ENCODE measurements at regions of chr2 and their contacts with region 1.

Region 1: DNA sequence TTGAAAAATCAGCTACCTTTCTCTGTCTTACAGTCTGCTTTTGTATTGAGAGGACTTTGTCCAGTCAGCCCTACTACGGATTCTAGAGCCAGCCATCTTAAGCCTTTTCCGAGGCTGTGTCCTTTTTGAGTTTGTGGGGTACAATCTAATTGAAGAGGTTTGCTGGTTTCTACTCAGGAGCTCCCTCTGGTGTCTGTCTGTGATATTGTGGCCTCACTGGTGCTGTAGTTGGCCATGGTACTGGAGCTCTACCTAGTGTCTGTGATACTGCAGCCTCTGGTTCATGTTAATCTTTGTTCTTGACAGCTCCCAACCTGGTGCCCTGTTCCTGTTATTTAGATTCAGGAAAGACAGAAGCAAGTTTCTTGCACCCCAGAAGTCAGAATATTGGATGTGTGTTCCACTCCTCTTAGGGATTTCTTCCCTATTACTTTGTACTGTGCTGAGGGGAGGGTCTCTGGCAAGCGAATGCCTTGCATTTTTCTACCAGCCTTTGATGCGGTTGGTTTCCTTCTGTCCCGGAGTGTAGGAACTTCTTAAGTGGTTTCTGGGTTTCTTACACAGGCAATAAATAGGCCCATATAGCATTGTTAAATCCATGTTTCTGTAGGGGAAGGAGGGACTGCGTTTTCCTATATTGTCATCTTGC is 78.5 kb downstream of the ACSL3 start:
- DNase-seq: peak; percentile 73
- H3K4me3 ChIP-seq: no peak overlapping the region
- H3K27ac ChIP-seq: no peak overlapping the region
- H3K4me1 ChIP-seq: no peaks in the 10 kb centered on the region
- CTCF ChIP-seq: peak; percentile 96

Region 2: GRCh38 chr2:222518570-222519381 is 420.6 kb before region 1 on chr2:
- CTCF ChIA-PET with region 1: no interaction called
- POLR2A ChIA-PET with region 1: no interaction called
- intact Hi-C with region 1: no loop called
- DNase-seq: no peak
- H3K4me3 ChIP-seq: no peak overlapping the region
- H3K27ac ChIP-seq: no peak overlapping the region
- H3K4me1 ChIP-seq: no peaks in the 10 kb centered on the region
- CTCF ChIP-seq: no peak

Region 3: DNA sequence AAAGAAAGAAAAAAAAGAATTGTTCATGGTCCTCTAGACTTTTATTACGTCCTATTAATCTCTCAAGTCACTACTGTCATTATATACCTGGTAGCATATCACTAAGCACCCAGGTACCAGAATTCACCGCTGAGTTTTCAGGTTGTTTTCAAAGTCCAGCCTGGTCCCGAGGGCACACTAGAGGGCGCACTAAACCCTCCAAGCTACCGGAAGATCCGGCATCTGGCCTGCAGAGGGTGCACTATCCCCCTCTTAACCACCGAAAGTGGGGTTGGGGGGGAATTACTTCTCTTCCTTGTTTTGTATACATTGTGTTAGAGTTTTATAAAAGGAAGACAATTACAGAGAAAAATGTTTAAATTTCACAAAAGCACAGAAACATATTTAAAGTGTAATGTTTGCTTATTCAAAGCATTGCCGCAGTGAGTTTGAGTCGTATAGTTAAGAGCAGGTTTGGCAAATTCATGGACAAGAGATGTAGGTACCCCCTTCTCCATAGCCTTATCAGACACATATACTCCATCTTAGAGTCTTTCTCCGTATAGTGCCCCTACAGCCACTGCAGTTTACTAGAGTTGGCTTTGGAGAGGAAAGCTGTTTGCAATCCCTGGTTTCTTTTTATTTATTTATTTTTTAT is 248.7 kb before region 1 on chr2:
- CTCF ChIA-PET with region 1: interaction called, 4 read pairs
- POLR2A ChIA-PET with region 1: no interaction called
- intact Hi-C with region 1: loop called (anchors 1 kb)
- DNase-seq: peak; percentile 89
- H3K4me3 ChIP-seq: no peak overlapping the region
- H3K27ac ChIP-seq: no peak overlapping the region
- H3K4me1 ChIP-seq: no peaks in the 10 kb centered on the region
- CTCF ChIP-seq: peak; percentile 100

Region 4: GRCh38 chr2:222969491-222969890 is 30.2 kb after region 1 on chr2:
- CTCF ChIA-PET with region 1: no interaction called
- POLR2A ChIA-PET with region 1: no interaction called
- intact Hi-C with region 1: no loop called
- DNase-seq: no peak
- H3K4me3 ChIP-seq: no peak overlapping the region
- H3K27ac ChIP-seq: no peak overlapping the region
- H3K4me1 ChIP-seq: no peaks in the 10 kb centered on the region
- CTCF ChIP-seq: no peak

Region 5: DNA sequence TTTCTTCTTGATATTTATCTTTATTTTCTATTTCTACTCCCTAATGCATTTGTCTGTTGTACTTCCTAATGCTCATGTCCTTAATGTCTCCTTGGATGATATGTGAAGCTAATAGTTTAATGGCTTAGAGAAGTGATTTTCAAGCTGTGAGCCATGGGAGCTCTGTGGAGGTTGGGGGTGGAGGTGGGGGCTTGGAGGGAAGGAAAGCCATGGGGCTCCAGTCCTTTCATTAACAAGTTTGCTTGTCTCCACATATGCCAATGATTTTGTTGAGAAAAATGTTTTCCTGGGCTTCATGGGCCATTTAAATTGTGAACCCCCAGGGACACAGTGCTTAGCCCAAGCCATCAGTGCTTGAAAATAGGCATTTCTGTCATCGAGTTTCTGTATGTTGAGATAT is 398.7 kb after region 1 on chr2:
- CTCF ChIA-PET with region 1: no interaction called
- POLR2A ChIA-PET with region 1: no interaction called
- intact Hi-C with region 1: no loop called
- DNase-seq: no peak
- H3K4me3 ChIP-seq: no peak overlapping the region
- H3K27ac ChIP-seq: no peak overlapping the region
- H3K4me1 ChIP-seq: no peaks in the 10 kb centered on the region
- CTCF ChIP-seq: no peak

Measured in OCI-LY7 (cell line).